ENCODE measurements at regions of chr17 and their contacts with region 1.

Region 1: GRCh38 chr17:43846221-43846712 is 709 bp upstream of the CD300LG start:
- DNase-seq: peak; percentile 76 to 91 (median 87)
- H3K4me3 ChIP-seq: no peak overlapping the region
- H3K27ac ChIP-seq: no peak overlapping the region
- H3K4me1 ChIP-seq: no peaks in the 10 kb centered on the region
- H3K27me3 ChIP-seq: no peaks in the 10 kb centered on the region
- CTCF ChIP-seq: peak; percentile 90 to 96 (median 94)
- POLR2A ChIP-seq: no peak

Region 2: GRCh38 chr17:43694077-43694870 is 152.0 kb before region 1 on chr17:
- intact Hi-C with region 1: loop called in 1 of 2 experiments (anchors 10 kb)
- DNase-seq: peak; percentile 78 to 90 (median 83)
- H3K4me3 ChIP-seq: no peak overlapping the region
- H3K27ac ChIP-seq: no peak overlapping the region
- H3K4me1 ChIP-seq: peaks cover 7 to 13% of the 10 kb centered on the region in 2 donors
- H3K27me3 ChIP-seq: no peaks in the 10 kb centered on the region
- CTCF ChIP-seq: peak; percentile 83 to 99 (median 98)
- POLR2A ChIP-seq: no peak

Region 3: GRCh38 chr17:43760254-43760852 is 85.9 kb before region 1 on chr17:
- intact Hi-C with region 1: loop called in 1 of 2 experiments (anchors 10 kb)
- DNase-seq: peak; percentile 92 to 98 (median 96)
- H3K4me3 ChIP-seq: no peak overlapping the region
- H3K27ac ChIP-seq: no peak overlapping the region
- H3K4me1 ChIP-seq: peaks cover 1 to 3% of the 10 kb centered on the region in 2 donors
- H3K27me3 ChIP-seq: no peaks in the 10 kb centered on the region
- CTCF ChIP-seq: peak; percentile 95 to 100 (median 100)
- POLR2A ChIP-seq: no peak

Region 4: DNA sequence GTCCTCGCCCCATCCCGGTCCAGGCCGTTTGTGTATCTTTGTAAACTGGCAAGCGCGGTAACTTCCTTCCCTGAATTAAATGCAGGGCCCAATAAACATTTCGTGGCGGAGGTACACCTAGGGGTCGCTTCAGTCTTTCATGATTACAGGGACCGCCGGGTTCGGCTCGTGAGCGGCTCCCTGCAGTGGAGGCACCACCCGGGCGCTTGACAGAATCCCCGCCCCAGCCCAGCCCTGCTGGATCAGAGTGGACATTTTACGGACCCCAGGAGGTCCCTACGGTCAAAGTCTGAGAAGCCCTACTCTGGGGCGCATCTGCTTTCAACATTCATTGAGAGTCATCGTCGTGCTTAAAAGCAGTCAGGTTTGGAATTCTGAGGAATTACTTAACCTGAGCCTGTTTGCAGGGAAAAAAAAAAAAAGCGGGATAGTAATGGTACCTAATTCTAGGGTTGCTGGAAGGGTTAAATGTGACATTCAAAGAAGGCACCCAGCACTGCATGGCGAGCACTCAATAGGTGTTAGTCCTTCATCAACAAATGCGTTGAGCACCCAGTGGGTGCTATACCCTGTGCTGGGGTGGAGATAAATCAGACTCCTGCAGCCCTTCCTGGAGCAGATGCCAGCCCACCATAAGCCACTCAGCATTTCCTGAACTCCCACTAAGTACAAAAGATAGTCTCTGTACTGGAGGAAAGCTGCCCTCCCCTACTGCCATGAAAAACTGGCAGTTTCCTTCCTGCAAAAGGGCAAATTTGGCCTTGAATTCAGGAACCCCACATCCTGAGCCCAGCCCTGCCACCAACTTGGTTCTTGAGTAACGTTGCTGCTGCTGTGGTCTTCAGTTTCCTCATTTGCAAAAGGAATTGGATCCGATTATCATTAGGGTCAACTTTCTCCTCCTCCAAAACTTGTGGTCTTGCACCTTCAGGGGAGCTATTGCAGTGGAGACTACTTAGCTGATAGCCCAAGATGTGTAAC is 66.8 kb before region 1 on chr17:
- intact Hi-C with region 1: loop called in 1 of 2 experiments (anchors 5 kb)
- DNase-seq: peak in 4 of 7 donors; percentile 39 to 73 (median 54)
- H3K4me3 ChIP-seq: peak overlapping the region; percentile 22 to 81 (median 62)
- H3K27ac ChIP-seq: peak overlapping the region in 4 of 5 donors; percentile 98 to 100 (median 100)
- H3K4me1 ChIP-seq: peaks cover 12 to 30% of the 10 kb centered on the region in 2 donors
- H3K27me3 ChIP-seq: no peaks in the 10 kb centered on the region
- CTCF ChIP-seq: peak in 2 of 6 experiments; percentile 7 to 12
- POLR2A ChIP-seq: no peak

Region 5: DNA sequence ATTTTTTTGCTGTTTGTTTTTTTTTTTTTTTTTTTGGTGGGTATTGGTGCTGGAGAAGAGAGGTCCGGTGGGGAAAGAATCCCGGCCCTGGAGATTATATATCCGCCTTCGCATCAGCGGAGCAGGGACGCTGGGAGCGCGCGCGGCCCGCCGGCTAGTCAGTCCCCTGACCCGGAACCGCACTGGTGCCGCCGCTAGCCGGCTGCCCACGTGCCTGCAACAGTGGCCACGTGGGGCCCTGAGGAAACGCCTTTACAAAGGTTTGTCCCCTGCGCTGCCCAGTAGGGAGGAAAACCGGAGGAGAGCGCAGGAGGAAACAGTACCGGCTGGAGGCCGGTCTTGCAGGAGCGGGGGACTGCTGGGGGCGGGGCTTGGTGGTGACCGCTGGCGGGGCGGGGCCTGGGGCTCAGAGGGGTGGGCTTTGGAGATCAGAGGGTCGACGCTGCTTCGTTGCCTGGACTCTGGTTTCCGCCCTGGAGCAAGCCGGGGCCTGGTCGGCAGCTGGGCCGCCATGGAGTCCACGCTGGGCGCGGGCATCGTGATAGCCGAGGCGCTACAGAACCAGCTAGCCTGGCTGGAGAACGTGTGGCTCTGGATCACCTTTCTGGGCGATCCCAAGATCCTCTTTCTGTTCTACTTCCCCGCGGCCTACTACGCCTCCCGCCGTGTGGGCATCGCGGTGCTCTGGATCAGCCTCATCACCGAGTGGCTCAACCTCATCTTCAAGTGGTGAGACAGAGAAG is 224.4 kb after region 1 on chr17 and contains the start of gene G6PC3:
- intact Hi-C with region 1: no loop called
- DNase-seq: peak; percentile 95 to 98 (median 97)
- H3K4me3 ChIP-seq: peak within 1 kb of the TSS in 3 of 4 donors; percentile 15 to 77 (median 66)
- H3K27ac ChIP-seq: peak within 1 kb of the TSS; percentile 48 to 92 (median 81)
- H3K4me1 ChIP-seq: peaks cover 25 to 29% of the 10 kb centered on the region in 2 donors
- H3K27me3 ChIP-seq: no peaks in the 10 kb centered on the region
- CTCF ChIP-seq: peak in 2 of 6 experiments; percentile 18 to 31
- POLR2A ChIP-seq: peak; percentile 60 to 85
- total RNA-seq, gene G6PC3: 51.2 to 114 (median 80.6) TPM

Measured in adrenal gland (tissue), 19 donors.